Motor neuron (in vitro differentiated cells): ENCODE measurements at regions of chr4 and their contacts with region 1.

Region 1: DNA sequence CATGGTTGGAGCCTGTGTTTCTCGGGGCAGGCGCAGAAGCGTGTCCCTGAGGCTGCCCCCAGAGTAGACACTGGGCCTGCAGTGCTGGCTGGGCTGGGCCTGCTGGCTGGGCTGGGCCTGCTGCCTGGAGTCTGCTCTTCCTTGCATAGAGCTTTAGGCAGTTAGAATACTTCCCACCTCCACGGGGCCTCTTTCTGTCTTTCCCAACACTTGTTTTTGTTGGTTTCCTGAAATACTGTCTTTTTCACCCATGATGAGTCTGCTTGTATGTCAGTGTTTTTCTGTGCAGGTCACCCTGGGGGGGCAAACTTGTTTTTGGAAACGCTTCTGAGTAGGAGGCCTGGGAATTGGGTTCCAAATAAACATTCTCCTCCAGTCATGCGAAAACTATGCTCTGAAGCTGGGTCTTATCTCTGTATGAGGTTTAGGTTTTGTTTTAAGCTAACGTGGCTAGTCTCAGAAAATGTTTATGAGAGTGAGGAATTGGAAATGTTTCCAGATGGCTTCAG is 32.2 kb downstream of the TRMT44 start:
- ATAC-seq: peak in 5 of 8 experiments; percentile 6 to 90 (median 52)
- H3K4me3 ChIP-seq: no peak overlapping the region
- H3K27ac ChIP-seq: no peak overlapping the region
- H3K4me1 ChIP-seq: no peaks in the 10 kb centered on the region

Region 2: DNA sequence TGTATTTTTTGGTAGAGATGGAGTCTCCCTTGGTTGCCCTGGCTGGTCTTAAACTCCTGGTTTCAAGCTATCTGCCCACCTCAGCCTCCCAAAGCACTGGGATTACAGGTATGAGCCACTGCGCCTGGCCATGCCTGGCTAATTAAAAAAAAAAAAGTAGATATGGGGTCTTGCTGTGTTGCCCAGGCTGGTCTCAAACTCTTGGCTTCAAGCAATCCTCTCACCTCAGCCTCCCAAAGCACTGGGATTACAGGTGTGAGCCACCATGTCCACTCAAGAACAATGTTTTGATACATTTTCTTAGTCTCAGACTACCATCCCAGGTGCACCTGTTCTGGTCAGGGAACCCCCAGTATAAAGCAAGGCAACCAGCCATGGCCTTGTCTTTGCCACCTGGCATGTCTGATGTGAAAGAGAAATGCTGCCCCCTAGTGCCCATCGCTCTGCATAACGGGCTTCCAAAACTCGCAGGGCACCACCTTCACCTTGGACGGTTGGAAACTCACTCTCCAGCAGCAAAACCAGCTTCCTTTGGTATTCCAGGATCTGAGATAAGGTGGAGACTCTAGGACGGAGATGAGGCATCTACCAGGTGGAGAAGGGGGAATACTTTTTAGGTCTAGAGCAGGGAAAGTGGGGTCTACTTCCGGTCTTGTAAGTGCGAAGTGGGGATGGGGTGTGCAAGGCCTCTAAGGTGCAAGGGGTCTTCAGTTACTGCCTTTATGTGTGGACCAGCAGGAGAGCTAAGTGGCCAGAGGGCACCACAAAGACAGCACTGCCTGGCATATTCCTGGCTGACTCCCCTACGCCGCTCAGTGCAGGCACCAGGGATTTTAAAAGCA is 485.4 kb before region 1 on chr4:
- in situ Hi-C with region 1: no loop called
- ATAC-seq: peak; percentile 47 to 67 (median 54)
- H3K4me3 ChIP-seq: no peak overlapping the region
- H3K27ac ChIP-seq: no peak overlapping the region
- H3K4me1 ChIP-seq: peaks cover 0 to 7% of the 10 kb centered on the region in 2 donors

Region 3: DNA sequence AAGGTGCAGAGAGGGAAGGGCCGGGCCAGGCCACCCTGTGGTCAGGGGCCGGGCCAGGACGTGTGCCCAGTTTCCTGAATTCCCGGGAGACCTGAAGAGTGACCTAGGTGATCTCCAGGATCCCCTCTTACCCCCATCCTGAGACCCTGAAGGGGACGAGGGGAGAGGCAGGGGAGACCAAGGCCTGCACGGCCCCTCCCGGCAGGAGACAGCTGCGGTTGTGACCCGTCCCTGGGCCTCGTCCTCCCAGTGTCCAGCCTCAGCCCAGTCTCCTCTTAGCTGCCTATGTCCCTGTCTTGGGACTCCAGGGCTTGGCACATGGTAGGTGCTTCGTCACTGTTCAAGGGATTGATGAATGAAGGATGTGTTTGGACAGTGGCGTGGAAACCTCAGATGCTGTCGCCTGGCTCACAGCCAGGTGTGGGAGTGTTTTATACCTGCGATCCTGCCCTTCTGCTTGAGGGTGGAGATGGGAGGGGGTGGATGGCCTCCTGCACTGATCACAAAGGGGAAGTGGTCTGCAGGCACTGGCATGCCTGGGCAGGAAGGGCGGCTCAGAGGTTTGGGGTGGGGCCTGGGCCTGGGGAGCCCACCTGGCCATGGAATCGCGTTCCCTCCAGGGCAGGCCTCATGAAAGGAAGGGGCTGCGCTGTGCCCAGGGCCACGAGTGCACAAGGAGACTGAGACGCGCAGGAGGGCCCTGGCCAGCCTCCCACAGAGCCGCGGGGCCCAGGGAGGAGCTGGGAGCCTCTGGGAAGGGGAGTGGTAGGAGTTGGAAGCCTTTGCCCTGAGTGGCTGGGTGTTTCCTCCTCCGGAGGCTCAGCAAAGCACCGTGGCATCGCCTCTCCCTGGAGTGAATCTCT is 266.8 kb before region 1 on chr4:
- in situ Hi-C with region 1: no loop called
- ATAC-seq: peak in 7 of 8 experiments; percentile 14 to 71 (median 38)
- H3K4me3 ChIP-seq: no peak overlapping the region
- H3K27ac ChIP-seq: no peak overlapping the region
- H3K4me1 ChIP-seq: peaks cover 13 to 35% of the 10 kb centered on the region in 2 donors

Region 4: DNA sequence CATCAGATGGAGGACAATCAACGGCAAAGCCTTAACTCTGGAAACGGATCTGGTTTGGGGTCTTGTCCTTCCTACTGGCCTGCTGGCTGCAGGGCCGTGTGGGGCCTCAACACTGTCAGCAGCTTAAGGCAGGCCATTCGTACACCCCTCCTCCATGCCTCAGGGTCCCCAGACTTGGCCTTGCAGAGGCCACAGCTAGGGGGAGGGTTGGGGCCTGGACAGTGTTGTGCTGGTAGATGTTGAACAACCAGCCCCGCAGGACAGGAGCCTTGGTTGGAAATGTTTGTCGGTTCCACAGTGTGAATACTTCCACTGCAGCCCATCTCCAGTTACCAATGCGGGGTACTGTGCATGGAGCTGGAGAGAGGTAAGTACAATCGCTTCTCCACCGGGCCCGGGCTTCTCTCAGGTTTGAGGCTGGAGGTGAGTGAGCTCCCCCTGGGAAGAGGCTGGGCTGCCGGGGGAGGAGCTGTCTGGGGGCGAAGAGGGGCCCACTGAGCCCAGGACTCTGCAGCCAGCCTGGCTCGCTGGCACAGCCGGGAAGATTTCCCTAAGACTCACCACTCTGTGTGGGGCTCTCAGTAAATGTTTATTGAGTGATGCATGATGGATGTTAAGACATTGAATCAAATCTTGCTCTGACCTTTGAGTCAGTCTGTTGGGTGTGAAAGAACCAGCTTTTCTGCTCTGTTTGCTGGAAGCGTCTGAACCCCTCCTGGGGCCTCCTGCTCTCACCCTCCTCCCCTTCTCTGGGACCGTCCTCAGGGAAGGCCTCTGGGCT is 87.7 kb after region 1 on chr4:
- in situ Hi-C with region 1: no loop called
- ATAC-seq: peak in 4 of 8 experiments; percentile 33 to 78 (median 56)
- H3K4me3 ChIP-seq: no peak overlapping the region
- H3K27ac ChIP-seq: no peak overlapping the region
- H3K4me1 ChIP-seq: peaks cover 0 to 10% of the 10 kb centered on the region in 2 donors

Region 5: DNA sequence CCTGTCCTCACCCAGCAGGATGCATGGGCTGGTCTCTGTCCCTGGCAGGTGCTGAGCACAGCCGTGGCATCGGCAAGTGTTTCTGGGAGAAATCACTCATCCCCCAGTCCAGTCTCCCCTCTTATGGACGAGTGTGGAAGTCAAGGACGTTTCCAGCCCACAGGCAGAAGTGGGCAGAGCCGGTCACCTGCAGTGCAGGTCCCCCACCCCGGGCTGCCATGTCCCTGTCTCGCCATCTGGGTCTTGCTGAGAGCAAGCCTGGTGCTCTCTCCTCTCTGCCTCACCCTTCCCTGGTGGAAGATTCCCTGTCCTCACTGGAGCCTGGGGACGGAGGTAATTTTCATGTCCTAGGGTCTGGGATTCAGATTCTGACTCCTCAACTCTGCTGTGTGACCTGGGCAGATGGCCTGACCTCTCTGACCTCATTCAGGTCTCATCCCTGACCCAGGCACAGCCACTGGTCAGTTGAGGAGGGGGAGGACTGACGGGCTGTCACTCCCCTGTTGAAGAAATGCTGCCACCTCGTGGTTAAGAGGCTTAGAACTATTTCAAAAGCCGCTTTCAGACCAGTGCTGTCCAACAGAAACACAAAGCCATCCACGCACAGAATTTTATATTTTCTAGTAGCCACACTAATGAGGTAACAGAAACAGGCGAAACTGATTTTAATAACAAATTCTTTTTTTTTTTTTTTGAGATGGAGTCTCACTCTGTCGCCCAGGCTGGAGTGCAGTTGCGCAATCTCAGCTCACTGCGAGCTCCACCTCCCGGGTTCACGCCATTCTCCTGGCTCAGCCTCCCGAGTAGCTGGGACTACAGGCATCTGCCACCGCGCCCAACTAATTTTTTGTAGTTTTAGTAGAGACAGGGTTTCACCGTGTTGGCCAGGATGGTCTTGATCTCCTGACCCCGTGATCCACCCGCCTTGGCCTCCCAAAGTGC is 121.6 kb after region 1 on chr4:
- in situ Hi-C with region 1: loop called in 1 of 9 experiments (anchors 10 kb)
- ATAC-seq: peak in 7 of 8 experiments; percentile 31 to 79 (median 53)
- H3K4me3 ChIP-seq: no peak overlapping the region
- H3K27ac ChIP-seq: no peak overlapping the region
- H3K4me1 ChIP-seq: no peaks in the 10 kb centered on the region